ENCODE measurements at regions of chr2 and their contacts with region 1.

Region 1: DNA sequence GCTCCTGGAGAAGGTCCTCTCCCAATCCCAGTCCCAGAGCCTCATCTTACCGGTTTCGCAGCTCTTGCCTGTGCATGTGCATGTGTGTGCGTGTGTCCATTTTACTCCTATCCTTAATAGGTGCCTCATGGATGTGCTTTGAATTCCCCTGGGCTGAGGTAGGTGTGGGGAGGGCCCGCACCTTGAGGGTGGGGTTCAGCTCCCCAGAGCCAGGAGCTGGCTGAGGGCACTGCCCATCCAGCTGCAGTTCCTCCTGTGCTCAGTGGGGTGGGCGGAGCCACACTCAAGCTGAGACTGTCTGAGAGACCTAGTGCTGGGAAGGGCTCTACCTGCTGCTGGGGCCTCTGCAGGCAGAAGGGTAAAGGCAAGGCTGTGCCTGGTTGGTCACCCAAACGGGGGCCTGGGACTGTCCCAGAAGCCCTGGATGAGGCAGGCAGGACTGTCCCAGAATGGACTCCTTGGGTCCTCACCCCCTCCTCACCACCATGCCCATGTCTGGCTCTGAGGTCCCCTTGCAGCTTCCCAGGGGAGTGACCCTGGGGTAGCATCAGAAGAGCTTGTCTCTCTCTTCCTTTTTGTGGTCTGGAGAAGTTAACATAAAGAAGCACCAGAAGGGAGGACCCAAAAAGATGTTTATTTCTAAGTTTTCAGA is 8.9 kb downstream of the GDF7 start:
- DNase-seq: no peak
- H3K4me3 ChIP-seq: no peak overlapping the region
- H3K27ac ChIP-seq: peak overlapping the region in 1 of 2 experiments; percentile 45; a peak in 1 of 4 replicates
- H3K4me1 ChIP-seq: peaks cover 5 to 12% of the 10 kb centered on the region in 2 experiments; a peak in 3 of 4 replicates
- H3K27me3 ChIP-seq: peaks cover 10% of the 10 kb centered on the region
- CTCF ChIP-seq: peak; percentile 5; the same call in 1 of the 2 replicates
- EP300 ChIP-seq: no peak
- RAD21 ChIP-seq: no peak

Region 2: GRCh38 chr2:20687260-20687832 is 11.5 kb after region 1 on chr2:
- CTCF ChIA-PET with region 1: interaction called, 14 read pairs
- POLR2A ChIA-PET with region 1: no interaction called
- DNase-seq: no peak
- H3K4me3 ChIP-seq: no peak overlapping the region
- H3K27ac ChIP-seq: no peak overlapping the region
- H3K4me1 ChIP-seq: no peaks in the 10 kb centered on the region
- H3K27me3 ChIP-seq: no peaks in the 10 kb centered on the region
- CTCF ChIP-seq: no peak
- EP300 ChIP-seq: no peak
- RAD21 ChIP-seq: no peak

Region 3: GRCh38 chr2:20916604-20917286 is 240.9 kb after region 1 on chr2:
- CTCF ChIA-PET with region 1: interaction called, 10 read pairs
- POLR2A ChIA-PET with region 1: no interaction called
- DNase-seq: peak; percentile 50
- H3K4me3 ChIP-seq: no peak overlapping the region
- H3K27ac ChIP-seq: peak overlapping the region in 1 of 2 experiments; percentile 47; a peak in 2 of 4 replicates
- H3K4me1 ChIP-seq: peaks cover 13 to 20% of the 10 kb centered on the region in 2 experiments; a peak in 3 of 4 replicates
- H3K27me3 ChIP-seq: no peaks in the 10 kb centered on the region; the same call in 1 of the 2 replicates
- CTCF ChIP-seq: peak; percentile 45
- EP300 ChIP-seq: no peak
- RAD21 ChIP-seq: peak; percentile 74

Measured in SK-N-SH (cell line).